Activated naive CD4-positive, alpha-beta T cell treated with anti-CD3 and anti-CD28 coated beads for 36 hours (primary cell): ENCODE measurements at regions of chr4 and their contacts with region 1.

Region 1: DNA sequence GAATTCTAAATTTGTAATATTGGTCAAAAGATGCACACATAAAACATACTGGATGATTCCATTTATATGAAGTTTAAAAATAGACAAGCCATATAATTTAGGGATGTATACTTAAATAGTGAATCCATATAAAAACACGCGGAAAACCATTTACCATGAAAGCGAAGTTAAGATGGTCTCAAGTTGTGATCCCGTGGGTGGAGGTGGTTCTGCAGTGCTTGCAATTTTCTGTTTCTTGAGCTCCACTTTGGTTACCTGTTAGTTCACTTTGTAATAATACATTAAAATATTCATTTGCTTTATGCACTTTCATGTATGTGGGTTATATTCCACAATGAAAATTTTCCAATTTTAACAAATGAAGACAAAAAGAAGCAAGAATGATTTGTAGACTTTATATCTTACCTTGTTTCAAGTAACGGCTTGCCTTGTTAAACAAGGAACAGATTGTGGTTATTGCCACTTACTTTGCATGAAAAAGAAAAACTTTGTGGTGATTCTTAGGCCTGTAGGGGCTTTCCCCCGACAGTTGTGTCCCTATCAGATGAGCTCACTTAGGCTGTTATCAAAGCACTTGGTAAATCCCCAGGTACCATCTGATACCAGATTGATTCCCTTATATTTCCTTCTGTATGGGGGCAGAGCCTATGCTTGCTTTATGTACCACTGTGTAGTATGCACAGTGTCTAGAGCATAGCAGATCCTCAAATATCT is 12.2 kb downstream of the UCP1 start:
- DNase-seq: peak; percentile 48
- H3K4me3 Mint-ChIP-seq: no peak overlapping the region
- H3K27ac Mint-ChIP-seq: no peak overlapping the region
- H3K4me1 Mint-ChIP-seq: peaks cover 16% of the 10 kb centered on the region
- H3K27me3 Mint-ChIP-seq: peaks cover 8% of the 10 kb centered on the region

Region 2: DNA sequence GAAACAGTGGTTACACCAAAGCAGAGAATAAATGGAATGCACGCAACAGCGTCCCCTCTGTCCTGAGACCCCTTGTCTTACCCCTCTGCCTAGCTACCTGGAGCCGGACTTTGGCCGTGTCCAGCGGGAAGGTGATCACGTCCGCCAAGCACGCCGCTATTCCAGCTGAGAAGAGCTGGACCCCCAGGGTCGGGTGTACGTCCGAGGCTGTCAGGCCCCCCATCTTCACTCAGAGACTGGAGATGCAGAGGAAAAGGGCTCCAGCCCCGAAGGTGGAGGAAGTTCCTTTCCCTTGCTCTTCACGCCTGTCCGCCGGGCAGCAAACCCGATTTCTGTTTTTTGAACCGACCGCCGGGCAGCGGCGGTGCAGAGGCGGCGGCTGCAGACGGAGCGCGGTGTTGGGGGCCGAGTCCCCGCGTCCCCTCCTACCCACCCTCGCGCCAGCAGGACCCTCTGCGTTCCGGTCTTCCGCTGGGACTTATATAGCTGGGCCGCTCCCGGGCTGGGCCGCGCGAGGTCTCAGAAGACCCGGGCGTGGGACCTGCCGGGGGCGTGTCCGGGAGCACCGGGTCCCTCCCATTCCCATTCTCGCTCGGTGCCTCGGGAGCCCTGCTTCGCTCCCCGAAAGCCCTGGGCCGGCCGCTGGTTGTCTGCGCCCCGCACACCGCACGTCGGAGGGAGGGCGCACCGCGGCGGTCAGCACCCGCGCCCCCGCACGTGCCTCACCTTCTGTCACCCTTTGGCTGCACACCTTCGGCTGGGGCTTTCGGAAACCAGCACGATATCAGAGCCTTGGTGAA is 12.2 kb after region 1 on chr4 and contains the start of gene UCP1:
- CTCF ChIA-PET with region 1: no interaction called
- intact Hi-C with region 1: loop called (anchors 1 kb)
- DNase-seq: no peak
- H3K4me3 Mint-ChIP-seq: peak within 1 kb of the TSS; percentile 63
- H3K27ac Mint-ChIP-seq: no peak within 1 kb of the TSS
- H3K4me1 Mint-ChIP-seq: peaks cover 25% of the 10 kb centered on the region
- H3K27me3 Mint-ChIP-seq: peaks cover 49% of the 10 kb centered on the region
- total RNA-seq, gene UCP1: not detected